ENCODE measurements at regions of chr2 and their contacts with region 1.

Region 1: DNA sequence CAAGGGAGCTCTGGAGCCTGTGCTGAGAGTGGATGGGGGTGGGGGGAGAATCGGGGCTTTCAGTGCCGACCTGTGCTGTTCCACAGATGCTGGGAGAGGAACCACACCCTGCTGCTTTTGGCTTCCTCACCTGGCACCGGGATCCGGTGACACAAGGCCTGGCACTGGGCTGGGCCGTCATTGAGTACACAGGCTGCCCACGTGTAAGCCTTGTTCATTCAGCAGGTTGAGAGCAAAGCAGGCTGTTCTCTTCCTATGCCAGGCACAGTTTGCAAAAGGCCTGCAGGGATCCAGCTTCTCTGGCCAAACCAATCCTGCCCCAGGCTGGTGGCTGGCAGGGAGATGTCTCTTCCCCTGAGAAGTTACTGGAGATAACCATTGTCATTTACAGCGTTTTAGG is 17.1 kb downstream of the TRIB2 start:
- DNase-seq: peak in 18 of 42 donors; percentile 6 to 76 (median 49)

Region 2: GRCh38 chr2:12931186-12931844 is 197.5 kb after region 1 on chr2:
- intact Hi-C with region 1: loop called (anchors 10 kb)
- DNase-seq: peak in 19 of 42 donors; percentile 3 to 63 (median 25)

Measured in head of caudate nucleus (tissue), 42 donors.